Activated CD4-positive, alpha-beta T cell treated with anti-CD3 and anti-CD28 coated beads for 36 hours (primary cell): ENCODE measurements at regions of chr14 and their contacts with region 1.

Region 1: DNA sequence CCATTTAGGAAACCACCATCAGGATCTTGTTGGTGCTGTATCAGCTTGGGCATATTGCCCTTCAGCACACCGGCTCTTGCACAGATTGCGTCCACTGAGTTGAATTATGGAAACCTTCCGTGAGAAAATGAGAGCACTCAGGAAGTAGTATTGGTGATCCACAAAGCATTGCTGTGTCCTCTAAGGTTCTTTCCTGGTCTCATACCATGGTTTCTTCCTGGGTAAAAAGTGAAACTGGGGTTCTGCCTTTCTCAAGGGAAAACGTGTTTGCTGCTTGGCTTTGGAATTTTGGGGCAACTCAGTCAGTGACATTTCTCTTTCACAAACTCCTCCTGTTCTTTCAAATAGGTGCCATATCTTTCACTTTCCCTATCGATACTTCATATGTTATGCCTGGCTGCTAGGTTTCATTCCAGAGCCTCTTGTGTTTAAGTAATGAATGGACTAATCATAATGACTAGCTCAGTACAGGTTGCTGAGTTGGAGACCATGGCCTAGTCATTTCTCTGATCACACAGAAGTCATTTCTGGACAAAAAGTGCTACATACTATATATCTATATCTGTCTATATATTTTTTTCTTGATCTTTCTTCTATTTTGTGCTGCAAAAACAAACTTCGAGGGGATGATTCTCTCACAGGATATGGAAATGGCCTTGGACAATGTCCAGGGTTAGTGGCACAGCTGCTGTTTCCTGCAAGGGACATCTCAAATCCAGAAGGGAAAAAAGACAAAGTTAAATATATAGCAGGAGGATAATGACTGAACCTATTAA is 423.4 kb downstream of the ZFP36L1 start:
- DNase-seq: peak; percentile 20
- ATAC-seq: peak; percentile 94
- H3K4me3 Mint-ChIP-seq: no peak overlapping the region
- H3K27ac Mint-ChIP-seq: peak overlapping the region; percentile 55
- H3K4me1 Mint-ChIP-seq: peaks cover 46% of the 10 kb centered on the region
- H3K27me3 Mint-ChIP-seq: no peaks in the 10 kb centered on the region

Region 2: DNA sequence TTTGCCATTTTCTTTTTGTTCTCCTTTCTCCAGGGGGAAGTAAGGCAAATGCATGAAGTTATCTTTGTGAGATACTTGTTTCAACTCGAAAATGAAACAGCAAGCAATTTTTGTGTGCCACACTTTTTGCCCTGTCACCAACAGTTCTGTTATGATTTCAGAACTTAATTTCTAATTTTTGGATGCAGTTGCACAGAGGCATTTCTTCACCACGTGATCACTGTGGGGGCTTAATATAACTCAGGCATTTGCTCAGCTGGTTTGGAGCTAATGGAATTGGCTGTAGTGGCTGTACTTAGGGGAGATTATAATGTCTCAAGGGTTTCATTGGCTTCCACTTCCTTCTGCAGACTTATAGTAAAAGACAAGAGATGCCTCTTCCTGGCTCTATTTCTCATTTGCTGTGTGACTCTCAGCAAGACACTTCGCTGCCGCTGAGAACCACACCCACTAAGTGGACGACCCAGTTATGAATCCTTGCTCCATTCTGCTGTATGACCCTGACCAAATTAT is 97.5 kb before region 1 on chr14:
- CTCF ChIA-PET with region 1: no interaction called
- POLR2A ChIA-PET with region 1: no interaction called
- intact Hi-C with region 1: loop called in 1 of 2 experiments (anchors 5 kb)
- DNase-seq: no peak
- ATAC-seq: no peak
- H3K4me3 Mint-ChIP-seq: no peak overlapping the region
- H3K27ac Mint-ChIP-seq: no peak overlapping the region
- H3K4me1 Mint-ChIP-seq: peaks cover 63% of the 10 kb centered on the region
- H3K27me3 Mint-ChIP-seq: no peaks in the 10 kb centered on the region

Region 3: GRCh38 chr14:68312884-68313610 is 56.4 kb before region 1 on chr14:
- CTCF ChIA-PET with region 1: interaction called, 3 read pairs
- POLR2A ChIA-PET with region 1: no interaction called
- intact Hi-C with region 1: loop called in 1 of 2 experiments (anchors 1 kb)
- DNase-seq: peak; percentile 71
- ATAC-seq: peak; percentile 93
- H3K4me3 Mint-ChIP-seq: no peak overlapping the region
- H3K27ac Mint-ChIP-seq: no peak overlapping the region
- H3K4me1 Mint-ChIP-seq: peaks cover 30% of the 10 kb centered on the region
- H3K27me3 Mint-ChIP-seq: no peaks in the 10 kb centered on the region